GM10248 (cell line): ENCODE measurements at regions of chr3 and their contacts with region 1.

Region 1: DNA sequence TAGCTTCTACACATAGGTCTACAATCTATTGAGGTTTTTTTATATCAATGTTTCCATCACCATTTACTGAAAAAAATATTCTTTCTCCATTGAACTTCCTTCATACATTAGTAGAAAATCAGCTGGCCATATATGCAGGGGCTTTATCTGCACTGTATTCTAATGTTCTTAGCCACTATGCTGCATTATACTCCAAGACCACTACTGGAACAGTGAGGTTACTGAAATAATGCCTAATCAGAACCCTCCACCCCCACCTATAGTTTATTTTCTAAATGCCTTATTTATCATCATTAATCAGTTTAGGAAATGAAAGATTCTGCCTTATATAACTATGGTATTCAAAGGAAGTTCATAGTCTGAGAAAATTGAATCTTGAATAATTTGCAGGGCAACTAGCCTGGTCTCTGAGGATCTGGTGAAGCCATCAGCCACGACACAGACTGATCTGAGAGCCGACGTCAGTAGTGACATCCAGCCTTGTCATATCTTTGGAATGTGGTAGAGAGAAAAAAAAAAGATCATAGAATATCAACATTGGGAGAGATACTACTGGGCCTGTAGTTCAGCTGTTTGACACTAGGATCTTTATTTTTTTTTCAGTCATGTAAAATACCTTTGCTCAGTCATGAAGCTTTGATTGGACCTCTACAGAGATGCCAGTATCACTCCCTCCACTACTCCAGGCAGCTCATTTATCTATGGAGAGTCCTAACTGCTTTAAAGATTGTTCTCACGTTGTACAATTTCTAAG is 66.6 kb downstream of the P3H2 start:
- DNase-seq: no peak
- CTCF ChIP-seq: no peak

Region 2: GRCh38 chr3:190073264-190074008 is 19.3 kb after region 1 on chr3:
- CTCF ChIA-PET with region 1: interaction called, 10 read pairs
- POLR2A ChIA-PET with region 1: no interaction called
- DNase-seq: no peak
- CTCF ChIP-seq: no peak